Caco-2 (cell line): ENCODE measurements at regions of chr11 and their contacts with region 1.

Region 1: DNA sequence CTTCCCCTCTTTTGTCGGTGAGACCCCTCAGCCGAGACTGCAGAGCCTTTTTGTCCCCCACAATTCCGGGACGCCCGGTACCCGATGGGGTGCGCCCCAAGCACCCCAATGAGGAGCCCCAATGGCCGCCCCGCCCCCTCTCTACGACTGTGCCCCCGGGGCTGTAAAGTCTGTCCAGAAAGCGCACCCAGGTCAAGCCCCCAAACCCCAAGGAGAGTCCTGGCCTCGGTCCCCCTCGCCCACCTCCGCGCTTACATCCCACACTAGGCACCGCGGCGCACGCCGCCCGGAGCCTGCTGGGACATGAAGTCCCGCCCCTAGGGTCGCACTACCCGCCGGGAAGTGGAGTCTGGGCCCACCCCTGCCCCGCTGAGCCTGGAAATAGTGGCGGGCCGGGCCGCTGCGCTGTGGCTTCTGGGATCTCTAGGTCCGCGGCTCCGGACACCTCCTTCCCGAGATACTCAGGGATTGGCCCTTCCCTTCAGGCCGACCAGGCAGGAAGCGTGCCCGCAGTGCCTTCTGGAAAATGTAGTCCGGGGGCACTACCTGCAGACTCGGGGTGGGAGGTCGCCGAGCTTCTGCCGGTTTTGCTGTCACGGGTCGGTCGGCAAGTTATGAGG is at the start of gene MEN1:
- DNase-seq: peak; percentile 98 to 99
- H3K4me3 ChIP-seq: peak within 1 kb of the TSS; percentile 90
- H3K4me3 Mint-ChIP-seq: peak within 1 kb of the TSS; percentile 85
- H3K27ac Mint-ChIP-seq: peak within 1 kb of the TSS; percentile 34
- H3K4me1 ChIP-seq: peaks cover 2% of the 10 kb centered on the region
- H3K4me1 Mint-ChIP-seq: peaks cover 2% of the 10 kb centered on the region
- H3K27me3 ChIP-seq: no peaks in the 10 kb centered on the region
- H3K27me3 Mint-ChIP-seq: no peaks in the 10 kb centered on the region
- CTCF ChIP-seq: no peak
- total RNA-seq, gene MEN1: 32.7 and 36.8 TPM in 2 replicates

Region 2: GRCh38 chr11:64767344-64768299 is 42.8 kb before region 1 on chr11:
- CTCF ChIA-PET with region 1: no interaction called
- POLR2A ChIA-PET with region 1: no interaction called
- intact Hi-C with region 1: no loop called
- DNase-seq: peak; percentile 76 to 83
- H3K4me3 ChIP-seq: no peak overlapping the region
- H3K4me3 Mint-ChIP-seq: no peak overlapping the region
- H3K27ac Mint-ChIP-seq: no peak overlapping the region
- H3K4me1 ChIP-seq: no peaks in the 10 kb centered on the region
- H3K4me1 Mint-ChIP-seq: no peaks in the 10 kb centered on the region
- H3K27me3 ChIP-seq: no peaks in the 10 kb centered on the region
- H3K27me3 Mint-ChIP-seq: no peaks in the 10 kb centered on the region
- CTCF ChIP-seq: peak; percentile 71 to 80

Region 3: DNA sequence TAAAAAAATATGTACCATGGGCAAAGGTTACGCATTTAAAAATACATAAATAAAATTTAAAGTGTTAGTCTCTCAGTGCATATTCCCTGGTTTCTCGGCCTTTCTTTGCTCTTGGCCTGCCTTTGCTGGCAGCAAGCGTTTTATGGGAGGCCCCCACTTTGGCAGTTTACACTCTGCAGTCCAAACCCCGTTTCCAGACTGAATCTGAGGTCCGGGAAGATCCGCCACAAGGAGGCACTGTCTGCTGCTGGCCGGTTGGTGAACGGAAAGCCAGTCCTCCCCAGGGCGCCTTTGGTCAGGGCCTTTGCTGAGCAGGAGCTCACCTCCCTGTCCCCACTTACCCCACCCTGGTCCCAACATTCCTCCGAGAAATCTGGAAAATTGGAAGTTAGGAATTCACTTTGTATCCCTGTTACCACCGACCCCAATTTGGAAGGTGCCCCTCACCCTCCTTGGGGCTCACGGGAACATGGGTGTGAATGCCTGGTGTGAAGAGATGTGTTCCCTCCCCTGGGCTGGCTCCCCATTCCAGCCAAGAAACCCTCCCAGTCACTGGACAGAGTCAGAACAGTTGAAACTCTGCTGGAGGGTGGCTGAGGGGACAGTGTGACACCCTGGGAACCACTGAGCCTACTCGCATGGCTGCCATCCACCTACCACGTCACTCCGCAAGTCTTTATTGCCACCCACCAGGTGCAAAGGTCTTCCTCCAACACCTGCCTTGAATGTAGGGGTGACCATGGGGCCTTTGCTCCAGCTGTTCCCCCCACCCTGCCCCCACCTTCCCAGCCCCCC is 22.7 kb before region 1 on chr11:
- CTCF ChIA-PET with region 1: interaction called, 10 read pairs
- POLR2A ChIA-PET with region 1: no interaction called
- intact Hi-C with region 1: no loop called
- DNase-seq: peak; percentile 61 to 71
- H3K4me3 ChIP-seq: no peak overlapping the region
- H3K4me3 Mint-ChIP-seq: no peak overlapping the region
- H3K27ac Mint-ChIP-seq: no peak overlapping the region
- H3K4me1 ChIP-seq: no peaks in the 10 kb centered on the region
- H3K4me1 Mint-ChIP-seq: no peaks in the 10 kb centered on the region
- H3K27me3 ChIP-seq: no peaks in the 10 kb centered on the region
- H3K27me3 Mint-ChIP-seq: no peaks in the 10 kb centered on the region
- CTCF ChIP-seq: peak; percentile 76 to 89